ENCODE measurements at regions of chr3 and their contacts with region 1.

Region 1: DNA sequence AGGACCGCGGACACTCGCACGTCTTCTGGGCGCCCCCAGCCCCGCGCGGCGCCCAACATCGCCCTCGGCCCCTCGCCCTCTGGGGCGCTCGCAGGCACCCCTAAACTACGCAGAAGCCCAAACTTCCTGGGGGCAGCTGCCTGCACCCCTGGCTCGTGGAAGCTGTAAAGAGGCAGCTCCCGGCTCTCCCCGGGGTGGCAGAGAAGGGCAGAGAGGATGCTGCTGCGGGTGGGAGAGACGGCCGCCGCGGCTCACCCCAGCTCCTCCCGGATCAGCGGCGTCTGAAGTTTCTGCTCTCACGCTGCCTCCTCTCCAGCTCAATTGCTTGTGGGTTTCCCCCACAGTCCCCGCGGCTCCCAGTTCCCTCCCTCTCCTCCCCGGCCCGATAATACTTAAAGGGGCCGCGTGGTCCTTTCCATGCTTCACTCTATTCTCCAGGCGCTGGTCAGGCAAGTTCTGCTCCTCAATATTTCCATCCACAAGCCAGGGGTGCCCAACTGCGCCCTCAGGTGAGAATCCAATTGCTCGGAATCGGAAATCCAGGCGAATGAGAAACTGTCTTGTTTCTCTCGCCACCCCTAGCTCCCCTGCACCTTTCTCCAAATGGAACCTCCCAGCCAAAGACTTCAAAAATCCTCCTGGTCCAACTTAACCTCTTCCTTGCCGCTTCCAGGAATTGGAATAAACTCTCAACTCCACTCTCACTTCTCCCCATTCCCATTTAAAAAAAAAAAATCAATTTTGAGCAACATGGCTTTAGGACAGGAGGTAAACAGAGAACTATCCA is 748.5 kb downstream of the ROBO1 start:
- H3K4me3 ChIP-seq: peak overlapping the region; percentile 85
- H3K27ac ChIP-seq: peak overlapping the region; percentile 99
- H3K4me1 ChIP-seq: peaks cover 2% of the 10 kb centered on the region; the same call in 1 of the 2 replicates
- CTCF ChIP-seq: peak; percentile 37; the same call in 1 of the 2 replicates

Region 2: GRCh38 chr3:78887547-78888011 is 131.8 kb before region 1 on chr3:
- CTCF ChIA-PET with region 1: no interaction called
- POLR2A ChIA-PET with region 1: no interaction called
- H3K4me3 ChIP-seq: no peak overlapping the region
- H3K27ac ChIP-seq: no peak overlapping the region
- H3K4me1 ChIP-seq: no peaks in the 10 kb centered on the region
- CTCF ChIP-seq: no peak

Region 3: DNA sequence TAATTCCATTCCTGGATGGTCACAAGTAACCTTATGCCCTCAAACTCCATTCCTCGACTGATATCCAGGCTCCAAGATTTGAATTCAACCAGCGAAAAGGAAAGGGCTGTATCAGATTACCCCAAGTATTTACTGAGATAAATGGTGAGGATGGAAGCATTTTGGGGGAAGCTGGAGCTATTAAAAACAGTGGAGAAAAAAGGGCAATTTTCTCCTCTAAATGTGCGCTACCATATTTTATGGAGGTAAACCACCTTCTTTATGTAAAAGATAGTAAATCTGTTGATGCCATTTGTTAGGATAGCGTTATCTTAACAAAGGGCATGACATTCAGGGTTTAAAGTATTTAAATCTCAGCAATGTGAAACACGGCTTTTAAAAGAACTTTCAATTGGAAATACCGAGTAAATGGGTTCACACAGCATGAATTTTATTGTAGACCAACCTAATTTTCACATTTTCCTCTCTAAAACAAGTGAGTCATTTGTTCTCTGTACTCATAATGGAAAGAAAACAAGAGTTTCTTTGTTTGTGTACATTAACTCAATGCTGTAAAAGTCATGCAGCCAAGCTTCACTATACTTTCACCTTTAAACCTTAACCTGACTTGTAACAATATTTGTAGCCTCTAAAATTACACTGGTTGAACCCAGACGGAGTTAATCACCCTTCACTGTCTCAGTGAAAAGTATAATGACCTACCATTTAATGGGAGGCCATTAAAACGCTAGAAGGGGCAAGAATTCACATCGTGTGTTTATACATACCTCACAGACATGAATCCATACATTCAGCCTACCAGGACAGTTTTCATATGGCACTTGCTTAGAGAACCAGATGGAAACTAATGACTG is 24.9 kb before region 1 on chr3:
- CTCF ChIA-PET with region 1: interaction called, 3 read pairs
- POLR2A ChIA-PET with region 1: interaction called, 10 read pairs
- H3K4me3 ChIP-seq: peak overlapping the region; percentile 2
- H3K27ac ChIP-seq: peak overlapping the region; percentile 75
- H3K4me1 ChIP-seq: peaks cover 21% of the 10 kb centered on the region
- CTCF ChIP-seq: no peak

Measured in HEK293 (cell line).